ENCODE measurements at regions of chr3 and their contacts with region 1.

Region 1: DNA sequence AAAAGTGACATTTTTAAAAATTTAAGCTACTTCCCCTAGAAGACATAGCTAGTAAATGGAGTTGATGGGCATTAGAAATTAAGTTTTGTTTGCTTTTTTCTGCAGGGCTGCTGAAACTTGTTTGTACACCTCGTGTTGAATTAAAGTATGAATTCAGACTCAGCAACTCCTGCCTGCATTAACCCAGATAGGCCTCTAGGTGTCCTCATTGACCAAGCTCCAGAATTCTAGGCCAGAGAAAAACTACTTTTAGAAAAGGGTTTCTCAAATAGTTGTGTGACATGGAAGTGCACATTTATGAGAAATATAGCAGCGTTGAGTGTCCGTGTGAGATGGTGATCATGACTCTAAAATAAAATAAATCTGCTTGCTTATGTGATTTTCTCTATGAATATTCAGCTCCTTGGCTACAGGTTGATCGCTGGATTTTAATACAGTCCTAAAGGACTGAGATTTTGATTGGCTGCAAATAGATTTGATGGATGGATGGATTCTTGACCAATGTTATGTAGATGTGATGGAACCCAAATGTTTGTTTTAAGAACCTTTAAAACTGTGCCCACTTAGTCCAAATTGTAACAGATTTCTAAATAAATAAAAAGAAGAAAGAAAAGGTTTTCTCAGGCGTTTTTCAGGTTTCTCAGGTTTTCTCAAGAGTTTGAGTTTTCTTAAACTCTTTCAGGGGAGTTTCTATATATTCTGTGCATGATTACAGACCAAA is 39.4 kb upstream of the LMOD3 start:
- DNase-seq: peak in 9 of 14 experiments; percentile 3 to 73 (median 19)
- ATAC-seq: peak; percentile 52
- H3K4me3 ChIP-seq: no peak overlapping the region
- H3K4me3 Mint-ChIP-seq: no peak overlapping the region
- H3K27ac ChIP-seq: no peak overlapping the region
- H3K27ac Mint-ChIP-seq: no peak overlapping the region
- H3K4me1 ChIP-seq: no peaks in the 10 kb centered on the region
- H3K4me1 Mint-ChIP-seq: no peaks in the 10 kb centered on the region
- H3K27me3 ChIP-seq: no peaks in the 10 kb centered on the region
- H3K27me3 Mint-ChIP-seq: no peaks in the 10 kb centered on the region
- CTCF ChIP-seq: peak; percentile 99

Region 2: GRCh38 chr3:68186733-68187132 is 975.0 kb before region 1 on chr3:
- CTCF ChIA-PET with region 1: no interaction called
- POLR2A ChIA-PET with region 1: no interaction called
- intact Hi-C with region 1: no loop called
- DNase-seq: no peak
- ATAC-seq: no peak
- H3K4me3 ChIP-seq: no peak overlapping the region
- H3K4me3 Mint-ChIP-seq: no peak overlapping the region
- H3K27ac ChIP-seq: no peak overlapping the region
- H3K27ac Mint-ChIP-seq: no peak overlapping the region
- H3K4me1 ChIP-seq: no peaks in the 10 kb centered on the region
- H3K4me1 Mint-ChIP-seq: no peaks in the 10 kb centered on the region
- H3K27me3 ChIP-seq: no peaks in the 10 kb centered on the region
- H3K27me3 Mint-ChIP-seq: no peaks in the 10 kb centered on the region
- CTCF ChIP-seq: no peak

Region 3: GRCh38 chr3:69129531-69129930 is 32.2 kb before region 1 on chr3:
- CTCF ChIA-PET with region 1: no interaction called
- POLR2A ChIA-PET with region 1: no interaction called
- intact Hi-C with region 1: no loop called
- DNase-seq: no peak
- ATAC-seq: no peak
- H3K4me3 ChIP-seq: no peak overlapping the region
- H3K4me3 Mint-ChIP-seq: no peak overlapping the region
- H3K27ac ChIP-seq: no peak overlapping the region
- H3K27ac Mint-ChIP-seq: no peak overlapping the region
- H3K4me1 ChIP-seq: no peaks in the 10 kb centered on the region
- H3K4me1 Mint-ChIP-seq: no peaks in the 10 kb centered on the region
- H3K27me3 ChIP-seq: no peaks in the 10 kb centered on the region
- H3K27me3 Mint-ChIP-seq: no peaks in the 10 kb centered on the region
- CTCF ChIP-seq: no peak

Region 4: GRCh38 chr3:69306239-69307185 is 144.8 kb after region 1 on chr3:
- CTCF ChIA-PET with region 1: interaction called, 107 read pairs
- POLR2A ChIA-PET with region 1: interaction called, 8 read pairs
- intact Hi-C with region 1: loop called (anchors 1 kb)
- DNase-seq: peak; percentile 39 to 87 (median 60)
- ATAC-seq: peak; percentile 99
- H3K4me3 ChIP-seq: no peak overlapping the region
- H3K4me3 Mint-ChIP-seq: no peak overlapping the region
- H3K27ac ChIP-seq: no peak overlapping the region
- H3K27ac Mint-ChIP-seq: no peak overlapping the region
- H3K4me1 ChIP-seq: no peaks in the 10 kb centered on the region
- H3K4me1 Mint-ChIP-seq: peaks cover 4% of the 10 kb centered on the region
- H3K27me3 ChIP-seq: no peaks in the 10 kb centered on the region
- H3K27me3 Mint-ChIP-seq: no peaks in the 10 kb centered on the region
- CTCF ChIP-seq: peak; percentile 95

Region 5: GRCh38 chr3:69410250-69410649 is 248.5 kb after region 1 on chr3:
- CTCF ChIA-PET with region 1: interaction called, 20 read pairs
- POLR2A ChIA-PET with region 1: no interaction called
- intact Hi-C with region 1: loop called (anchors 1 to 2 kb)
- DNase-seq: peak; percentile 19 to 78 (median 49)
- ATAC-seq: peak; percentile 82
- H3K4me3 ChIP-seq: no peak overlapping the region
- H3K4me3 Mint-ChIP-seq: no peak overlapping the region
- H3K27ac ChIP-seq: no peak overlapping the region
- H3K27ac Mint-ChIP-seq: no peak overlapping the region
- H3K4me1 ChIP-seq: peaks cover 4% of the 10 kb centered on the region
- H3K4me1 Mint-ChIP-seq: peaks cover 5% of the 10 kb centered on the region
- H3K27me3 ChIP-seq: no peaks in the 10 kb centered on the region
- H3K27me3 Mint-ChIP-seq: no peaks in the 10 kb centered on the region
- CTCF ChIP-seq: peak; percentile 87

Region 6: DNA sequence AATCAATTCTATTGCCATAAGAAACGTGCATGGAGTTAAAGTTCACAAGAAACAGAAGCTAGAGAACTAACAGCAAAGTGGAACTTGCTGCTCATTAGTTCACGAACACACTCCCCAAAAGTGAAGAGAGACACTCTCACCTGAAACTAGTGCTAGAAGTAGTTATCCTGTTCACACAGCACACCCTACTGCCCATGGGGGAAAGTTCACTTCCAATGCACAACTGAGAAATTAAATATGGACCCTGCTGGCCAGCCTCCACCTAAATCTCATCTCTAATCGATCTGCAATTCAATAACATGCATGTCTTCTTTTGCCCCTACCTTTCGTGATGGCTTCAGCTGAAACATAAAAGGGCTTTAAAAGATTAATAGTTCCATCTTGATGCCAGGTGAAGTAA is 263.5 kb after region 1 on chr3:
- CTCF ChIA-PET with region 1: interaction called, 3 read pairs
- POLR2A ChIA-PET with region 1: no interaction called
- intact Hi-C with region 1: loop called in 1 of 2 experiments (anchors 2 kb)
- DNase-seq: peak in 4 of 14 experiments; percentile 3 to 46 (median 34)
- ATAC-seq: no peak
- H3K4me3 ChIP-seq: no peak overlapping the region
- H3K4me3 Mint-ChIP-seq: no peak overlapping the region
- H3K27ac ChIP-seq: no peak overlapping the region
- H3K27ac Mint-ChIP-seq: no peak overlapping the region
- H3K4me1 ChIP-seq: no peaks in the 10 kb centered on the region
- H3K4me1 Mint-ChIP-seq: no peaks in the 10 kb centered on the region
- H3K27me3 ChIP-seq: no peaks in the 10 kb centered on the region
- H3K27me3 Mint-ChIP-seq: no peaks in the 10 kb centered on the region
- CTCF ChIP-seq: peak; percentile 25

Region 7: GRCh38 chr3:69665026-69665737 is 503.4 kb after region 1 on chr3:
- CTCF ChIA-PET with region 1: no interaction called
- POLR2A ChIA-PET with region 1: no interaction called
- intact Hi-C with region 1: loop called (anchors 5 kb)
- DNase-seq: no peak
- ATAC-seq: no peak
- H3K4me3 ChIP-seq: no peak overlapping the region
- H3K4me3 Mint-ChIP-seq: no peak overlapping the region
- H3K27ac ChIP-seq: no peak overlapping the region
- H3K27ac Mint-ChIP-seq: no peak overlapping the region
- H3K4me1 ChIP-seq: no peaks in the 10 kb centered on the region
- H3K4me1 Mint-ChIP-seq: no peaks in the 10 kb centered on the region
- H3K27me3 ChIP-seq: no peaks in the 10 kb centered on the region
- H3K27me3 Mint-ChIP-seq: no peaks in the 10 kb centered on the region
- CTCF ChIP-seq: no peak

Region 8: GRCh38 chr3:69671082-69671952 is 509.6 kb after region 1 on chr3:
- CTCF ChIA-PET with region 1: no interaction called
- POLR2A ChIA-PET with region 1: no interaction called
- intact Hi-C with region 1: loop called (anchors 5 kb)
- DNase-seq: peak in 2 of 14 experiments; percentile 7 to 11
- ATAC-seq: no peak
- H3K4me3 ChIP-seq: no peak overlapping the region
- H3K4me3 Mint-ChIP-seq: no peak overlapping the region
- H3K27ac ChIP-seq: no peak overlapping the region
- H3K27ac Mint-ChIP-seq: no peak overlapping the region
- H3K4me1 ChIP-seq: no peaks in the 10 kb centered on the region
- H3K4me1 Mint-ChIP-seq: no peaks in the 10 kb centered on the region
- H3K27me3 ChIP-seq: no peaks in the 10 kb centered on the region
- H3K27me3 Mint-ChIP-seq: peaks cover 4% of the 10 kb centered on the region
- CTCF ChIP-seq: no peak

Region 9: DNA sequence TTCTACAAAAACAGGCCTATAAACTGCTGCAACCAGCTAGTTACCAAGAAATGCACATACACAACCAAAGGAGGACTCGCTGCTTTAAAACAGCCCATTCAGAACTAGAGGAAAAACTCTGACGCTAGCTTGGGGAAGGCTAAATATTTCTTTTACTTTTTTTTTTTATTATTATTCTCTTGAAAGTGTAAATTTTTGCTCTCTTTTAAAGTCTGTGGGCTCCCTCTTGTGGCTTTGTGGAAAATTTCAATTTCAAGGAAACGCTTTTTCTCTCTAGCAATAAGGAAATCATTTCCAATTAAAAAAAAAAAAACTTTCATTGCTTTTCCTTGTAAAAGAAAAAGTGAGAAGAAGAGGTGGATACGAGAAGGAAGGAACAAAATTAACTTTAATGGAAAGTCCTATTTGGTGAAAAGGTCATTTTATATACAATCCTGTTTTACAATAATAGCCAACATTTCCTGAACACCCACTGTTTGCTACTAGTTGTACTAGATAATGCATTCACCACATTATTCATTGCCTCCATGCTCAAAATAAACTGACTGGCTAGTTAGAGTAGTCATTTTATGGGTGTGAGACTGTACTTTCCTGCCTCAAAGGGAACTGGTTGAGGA is 786.6 kb after region 1 on chr3:
- CTCF ChIA-PET with region 1: no interaction called
- POLR2A ChIA-PET with region 1: no interaction called
- intact Hi-C with region 1: loop called (anchors 5 kb)
- DNase-seq: peak in 2 of 14 experiments; percentile 1 to 3
- ATAC-seq: no peak
- H3K4me3 ChIP-seq: no peak overlapping the region
- H3K4me3 Mint-ChIP-seq: no peak overlapping the region
- H3K27ac ChIP-seq: no peak overlapping the region
- H3K27ac Mint-ChIP-seq: no peak overlapping the region
- H3K4me1 ChIP-seq: no peaks in the 10 kb centered on the region
- H3K4me1 Mint-ChIP-seq: no peaks in the 10 kb centered on the region
- H3K27me3 ChIP-seq: no peaks in the 10 kb centered on the region
- H3K27me3 Mint-ChIP-seq: no peaks in the 10 kb centered on the region
- CTCF ChIP-seq: peak; percentile 43